ENCODE measurements at regions of chr7 and their contacts with region 1.

Region 1: DNA sequence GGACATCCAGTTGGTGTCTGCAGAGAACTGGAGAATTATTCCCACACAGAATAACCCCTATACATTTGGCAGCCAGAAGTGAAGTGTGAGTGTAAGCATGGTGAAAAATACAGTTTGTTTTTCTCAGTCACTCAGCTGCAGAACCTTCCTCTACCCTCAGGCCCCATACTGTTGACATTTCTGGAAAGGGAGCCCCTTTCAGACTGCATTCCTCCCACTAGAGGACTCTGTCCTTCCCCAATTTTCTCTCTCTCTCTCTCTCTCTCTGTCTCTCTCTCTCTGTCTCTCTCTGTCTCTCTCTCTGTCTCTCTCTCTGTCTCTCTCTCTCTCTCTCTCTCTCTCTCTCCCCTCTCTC is 86.8 kb upstream of the STEAP1B start:
- DNase-seq: no peak
- H3K4me3 ChIP-seq: no peak overlapping the region
- H3K27ac ChIP-seq: no peak overlapping the region
- H3K4me1 ChIP-seq: peaks cover 8 to 27% of the 10 kb centered on the region in 2 donors
- H3K27me3 ChIP-seq: no peaks in the 10 kb centered on the region
- CTCF ChIP-seq: peak in 1 of 3 experiments; percentile 15

Region 2: GRCh38 chr7:22219036-22219435 is 367.7 kb before region 1 on chr7:
- intact Hi-C with region 1: loop called (anchors 10 kb)
- DNase-seq: no peak
- H3K4me3 ChIP-seq: peak overlapping the region; percentile 48 to 58
- H3K27ac ChIP-seq: peak overlapping the region; percentile 74 to 86
- H3K4me1 ChIP-seq: peaks cover 16 to 28% of the 10 kb centered on the region in 2 donors
- H3K27me3 ChIP-seq: no peaks in the 10 kb centered on the region
- CTCF ChIP-seq: no peak

Measured in ascending aorta (tissue), 2 donors.